ENCODE measurements at regions of chr2 and their contacts with region 1.

Region 1: GRCh38 chr2:195656859-195657633 is at the start of gene SLC39A10:
- DNase-seq: peak; percentile 97
- H3K4me3 Mint-ChIP-seq: peak within 1 kb of the TSS; percentile 98
- H3K27ac Mint-ChIP-seq: peak within 1 kb of the TSS; percentile 100
- H3K4me1 Mint-ChIP-seq: peaks cover 21% of the 10 kb centered on the region
- H3K27me3 Mint-ChIP-seq: peaks cover 13% of the 10 kb centered on the region

Region 2: DNA sequence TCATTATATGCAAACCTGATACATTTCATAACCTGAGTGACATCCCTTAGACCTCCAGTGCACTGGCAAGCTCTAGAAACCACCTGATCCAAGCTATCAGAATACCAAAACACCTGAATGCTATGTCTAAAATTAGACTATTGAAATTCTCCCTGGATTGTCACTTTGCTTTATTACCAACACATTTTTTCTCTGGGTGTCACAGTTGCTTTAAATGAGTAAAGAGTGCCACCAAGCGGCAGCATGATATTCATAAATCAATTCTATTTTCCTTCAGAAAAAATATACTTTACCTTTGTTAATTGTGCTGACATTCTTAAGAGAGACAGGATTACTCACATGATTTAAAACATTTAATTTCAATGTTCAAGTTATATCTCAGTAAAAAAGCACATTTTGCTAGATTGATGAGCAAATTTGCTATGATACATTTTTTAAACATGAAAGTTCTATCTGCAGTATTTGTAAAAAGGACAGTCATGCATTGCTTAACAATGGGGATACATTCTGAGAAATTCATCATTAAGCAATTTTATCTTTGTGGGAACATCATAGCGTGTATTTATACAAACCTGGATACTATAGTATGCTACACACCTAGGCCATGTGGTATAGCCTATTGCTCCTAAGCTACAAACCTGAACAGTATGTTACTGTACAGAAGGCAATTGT is 338.5 kb before region 1 on chr2:
- CTCF ChIA-PET with region 1: interaction called, 41 read pairs
- DNase-seq: peak; percentile 63
- H3K4me3 Mint-ChIP-seq: no peak overlapping the region
- H3K27ac Mint-ChIP-seq: no peak overlapping the region
- H3K4me1 Mint-ChIP-seq: peaks cover 22% of the 10 kb centered on the region
- H3K27me3 Mint-ChIP-seq: no peaks in the 10 kb centered on the region

Region 3: GRCh38 chr2:195410074-195410671 is 246.9 kb before region 1 on chr2:
- CTCF ChIA-PET with region 1: interaction called, 10 read pairs
- DNase-seq: no peak
- H3K4me3 Mint-ChIP-seq: no peak overlapping the region
- H3K27ac Mint-ChIP-seq: no peak overlapping the region
- H3K4me1 Mint-ChIP-seq: peaks cover 23% of the 10 kb centered on the region
- H3K27me3 Mint-ChIP-seq: no peaks in the 10 kb centered on the region

Region 4: GRCh38 chr2:195498176-195498575 is 158.9 kb before region 1 on chr2:
- CTCF ChIA-PET with region 1: interaction called, 29 read pairs
- DNase-seq: peak; percentile 63
- H3K4me3 Mint-ChIP-seq: no peak overlapping the region
- H3K27ac Mint-ChIP-seq: peak overlapping the region; percentile 5
- H3K4me1 Mint-ChIP-seq: peaks cover 46% of the 10 kb centered on the region
- H3K27me3 Mint-ChIP-seq: no peaks in the 10 kb centered on the region

Region 5: DNA sequence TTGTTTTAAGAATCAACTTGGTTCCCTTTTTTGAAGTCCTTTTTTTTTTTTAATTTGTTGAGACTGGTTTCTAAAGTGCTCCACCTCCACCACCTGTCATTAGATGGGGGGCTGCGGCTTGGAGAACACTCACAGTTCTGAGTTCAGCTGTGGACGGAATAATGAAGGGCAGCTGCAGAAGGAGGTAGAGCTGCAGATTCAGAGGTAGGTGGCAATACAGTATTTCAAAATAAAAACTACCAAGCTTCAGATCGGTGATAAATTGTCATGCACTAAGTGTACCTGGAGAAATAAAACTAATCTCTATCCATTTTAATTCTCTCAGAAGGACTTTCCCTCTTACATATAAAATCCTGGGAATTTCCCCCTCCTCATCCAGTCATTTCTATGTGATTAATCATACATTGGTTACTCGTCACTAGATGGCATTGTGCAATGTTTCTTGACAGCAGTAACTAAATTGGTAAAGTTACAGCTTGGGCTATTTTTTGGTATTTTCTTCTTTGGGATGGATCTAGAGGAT is 81.1 kb before region 1 on chr2:
- CTCF ChIA-PET with region 1: interaction called, 37 read pairs
- DNase-seq: no peak
- H3K4me3 Mint-ChIP-seq: peak overlapping the region; percentile 31
- H3K27ac Mint-ChIP-seq: peak overlapping the region; percentile 77
- H3K4me1 Mint-ChIP-seq: peaks cover 75% of the 10 kb centered on the region
- H3K27me3 Mint-ChIP-seq: no peaks in the 10 kb centered on the region

Region 6: GRCh38 chr2:196105951-196106350 is 448.9 kb after region 1 on chr2:
- CTCF ChIA-PET with region 1: no interaction called
- DNase-seq: no peak
- H3K4me3 Mint-ChIP-seq: no peak overlapping the region
- H3K27ac Mint-ChIP-seq: no peak overlapping the region
- H3K4me1 Mint-ChIP-seq: peaks cover 9% of the 10 kb centered on the region
- H3K27me3 Mint-ChIP-seq: no peaks in the 10 kb centered on the region

Measured in activated naive CD4-positive, alpha-beta T cell treated with anti-CD3 and anti-CD28 coated beads, Interleukin-2, amount 10 ng/mL, durations not matched to agents 7 days and 5 days (primary cell).